Esophagus muscularis mucosa (tissue), 4 donors: ENCODE measurements at regions of chr21 and their contacts with region 1.

Region 1: DNA sequence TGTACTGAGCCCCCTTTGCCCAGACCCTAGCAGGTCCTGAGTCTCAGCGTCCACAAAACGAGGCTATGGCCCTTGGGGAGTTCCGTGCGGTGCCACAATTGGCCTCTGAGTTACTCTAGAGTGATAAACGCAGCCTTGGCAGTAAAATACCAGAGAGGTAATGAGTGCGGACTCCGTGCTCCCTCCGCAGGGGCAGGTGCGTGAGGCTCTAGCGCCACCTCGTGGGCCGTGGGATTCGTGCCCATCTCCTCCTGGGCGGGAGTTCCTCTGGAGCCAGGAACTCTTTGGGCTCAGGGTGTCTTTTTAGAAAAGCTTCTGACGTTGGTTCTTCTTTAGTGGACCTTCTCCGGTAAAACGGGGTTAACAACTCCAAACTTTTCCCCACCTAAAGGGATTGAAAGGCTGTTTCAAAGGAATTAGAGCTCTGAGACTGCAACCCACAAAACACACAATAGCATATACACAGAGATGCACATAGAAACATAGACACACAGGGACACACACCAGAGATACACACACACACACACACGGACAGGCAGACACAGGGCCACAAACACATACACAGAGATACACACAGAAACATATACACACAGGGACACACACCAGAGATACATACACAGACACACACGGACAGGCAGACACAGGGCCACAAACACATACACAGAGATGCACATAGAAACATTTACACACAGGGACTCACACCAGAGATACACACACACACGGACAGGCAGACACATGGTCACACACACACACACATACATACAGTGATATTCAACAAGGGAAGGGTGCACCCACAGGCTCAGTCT is 99.4 kb downstream of the KCNJ15 start:
- DNase-seq: no peak
- H3K4me3 ChIP-seq: no peak overlapping the region
- H3K27ac ChIP-seq: no peak overlapping the region
- H3K4me1 ChIP-seq: peaks cover 4 to 10% (median 8%) of the 10 kb centered on the region in 4 donors
- H3K27me3 ChIP-seq: peaks cover 0 to 18% (median 0%) of the 10 kb centered on the region in 4 donors
- CTCF ChIP-seq: peak; percentile 74 to 83 (median 78)
- EP300 ChIP-seq: no peak
- POLR2A ChIP-seq: no peak

Region 2: DNA sequence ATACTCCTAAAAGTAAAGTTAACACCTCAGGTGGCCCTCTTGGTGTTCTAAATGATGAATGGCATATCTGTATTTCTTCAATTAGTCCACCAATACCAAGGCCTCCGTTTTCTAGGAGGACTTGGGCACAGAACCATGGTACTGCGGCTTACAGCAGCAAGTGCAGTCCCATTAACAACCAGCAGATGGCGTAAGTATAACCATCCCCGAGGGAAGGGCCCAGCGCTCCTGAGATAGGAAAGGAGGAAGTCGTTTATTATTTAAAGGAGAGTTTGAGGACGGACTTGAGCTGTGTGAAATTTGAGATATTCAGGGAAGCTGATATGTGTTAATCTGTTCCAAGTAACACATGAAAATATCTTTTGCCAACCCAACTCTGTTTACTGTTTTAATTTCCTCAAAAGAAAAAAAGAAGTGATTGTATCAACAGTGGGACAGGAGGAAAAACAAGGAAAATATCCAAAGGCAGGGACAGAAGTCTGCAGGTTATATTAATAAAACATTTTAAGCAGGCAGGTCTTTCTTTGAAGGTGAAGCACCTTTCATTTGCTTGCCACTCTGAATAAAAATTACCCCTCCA is 137.1 kb before region 1 on chr21:
- intact Hi-C with region 1: loop called (anchors 1 kb)
- DNase-seq: peak; percentile 93
- H3K4me3 ChIP-seq: no peak overlapping the region
- H3K27ac ChIP-seq: no peak overlapping the region
- H3K4me1 ChIP-seq: no peaks in the 10 kb centered on the region
- H3K27me3 ChIP-seq: no peaks in the 10 kb centered on the region
- CTCF ChIP-seq: peak; percentile 89 to 96 (median 89)
- EP300 ChIP-seq: no peak
- POLR2A ChIP-seq: no peak

Region 3: DNA sequence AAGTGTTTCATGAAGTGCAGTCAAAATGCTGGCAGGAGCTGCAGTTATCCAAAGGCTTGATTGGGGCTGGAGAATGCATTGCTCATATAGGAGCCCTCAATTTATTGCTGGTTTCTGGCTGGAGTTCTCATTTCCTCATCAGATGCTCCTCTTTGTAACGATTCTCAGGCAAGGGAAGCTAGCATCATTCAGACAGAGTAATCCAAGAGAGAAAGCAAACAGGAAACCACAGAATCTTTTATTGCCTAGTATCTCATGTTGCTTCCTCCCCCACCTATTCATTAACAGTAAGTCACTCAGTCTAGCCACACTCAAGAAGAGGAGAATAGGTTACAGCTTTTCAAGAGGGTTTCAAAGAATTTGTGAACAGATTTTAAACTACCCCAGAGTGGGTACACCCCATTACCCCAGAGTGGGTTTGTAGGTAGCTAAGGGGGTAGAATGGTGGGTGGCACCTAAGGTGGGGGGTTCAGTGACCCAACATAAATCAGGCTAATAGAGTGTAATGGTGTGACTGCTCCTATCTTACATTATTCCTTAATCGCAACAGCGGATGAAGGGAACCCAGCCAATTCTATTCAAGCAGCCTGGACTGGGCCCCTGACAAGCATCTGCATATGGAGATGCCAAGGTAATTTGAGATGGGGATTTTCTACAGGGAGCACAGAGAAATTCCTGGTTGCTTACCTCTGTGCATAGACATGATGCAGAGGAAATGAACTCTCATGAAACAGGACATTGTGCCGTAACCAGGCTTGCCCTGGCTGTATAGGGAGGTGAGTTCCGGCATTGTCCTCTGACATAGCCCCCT is 32.3 kb before region 1 on chr21:
- intact Hi-C with region 1: no loop called
- DNase-seq: peak; percentile 81
- H3K4me3 ChIP-seq: no peak overlapping the region
- H3K27ac ChIP-seq: no peak overlapping the region
- H3K4me1 ChIP-seq: no peaks in the 10 kb centered on the region
- H3K27me3 ChIP-seq: peaks cover 0 to 34% (median 0%) of the 10 kb centered on the region in 4 donors
- CTCF ChIP-seq: no peak
- EP300 ChIP-seq: no peak
- POLR2A ChIP-seq: no peak

Region 4: GRCh38 chr21:38729754-38730379 is 373.7 kb after region 1 on chr21:
- intact Hi-C with region 1: no loop called
- DNase-seq: no peak
- H3K4me3 ChIP-seq: no peak overlapping the region
- H3K27ac ChIP-seq: no peak overlapping the region
- H3K4me1 ChIP-seq: peaks cover 7 to 9% (median 7%) of the 10 kb centered on the region in 4 donors
- H3K27me3 ChIP-seq: peaks cover 0 to 15% (median 0%) of the 10 kb centered on the region in 4 donors
- CTCF ChIP-seq: no peak
- EP300 ChIP-seq: no peak
- POLR2A ChIP-seq: no peak